Caco-2 (cell line): ENCODE measurements at regions of chr9 and their contacts with region 1.

Region 1: DNA sequence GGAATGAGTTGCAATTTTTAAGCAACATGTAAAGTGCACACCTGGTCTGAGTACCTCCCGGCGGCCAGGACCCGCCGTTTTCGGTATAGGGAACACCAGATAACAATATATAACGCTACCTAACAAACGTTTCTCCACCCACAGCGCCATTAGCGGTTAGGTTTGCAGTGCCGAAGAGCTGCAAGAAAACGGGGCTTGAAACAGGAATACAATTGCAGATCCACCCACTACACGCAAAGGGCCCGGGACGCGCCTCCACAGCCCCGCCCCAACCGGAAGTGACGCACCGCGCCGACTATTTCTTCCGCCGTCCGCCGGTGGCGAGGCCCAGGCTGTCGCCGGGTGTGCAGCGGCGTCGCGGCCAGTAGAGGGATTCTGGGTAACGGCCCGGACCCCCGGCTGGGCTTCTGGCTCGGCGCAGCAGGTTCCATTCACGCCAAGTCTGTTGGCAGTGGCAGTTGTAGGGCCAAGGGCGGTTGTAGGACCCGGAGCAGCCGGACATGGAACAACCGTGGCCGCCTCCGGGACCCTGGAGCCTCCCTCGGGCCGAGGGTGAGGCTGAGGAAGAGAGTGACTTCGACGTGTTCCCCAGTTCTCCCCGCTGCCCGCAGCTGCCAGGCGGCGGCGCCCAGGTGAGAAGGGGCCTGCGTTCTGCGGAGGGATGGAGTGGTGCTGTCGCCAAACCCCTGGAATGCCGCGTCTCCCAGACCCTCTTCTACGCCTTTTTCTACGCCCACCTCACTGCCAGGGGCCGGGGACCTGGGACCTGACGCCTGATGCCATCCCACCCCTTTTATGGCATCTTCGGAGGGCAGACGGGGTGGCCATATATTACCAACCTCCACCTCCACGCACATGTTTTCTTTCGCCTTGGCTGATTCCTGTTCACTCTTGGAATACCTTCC is at the start of gene CDC37L1:
- DNase-seq: peak; percentile 95 to 96
- H3K4me3 ChIP-seq: peak within 1 kb of the TSS; percentile 89
- H3K4me3 Mint-ChIP-seq: no peak within 1 kb of the TSS
- H3K27ac Mint-ChIP-seq: no peak within 1 kb of the TSS
- H3K4me1 ChIP-seq: peaks cover 12% of the 10 kb centered on the region
- H3K4me1 Mint-ChIP-seq: no peaks in the 10 kb centered on the region
- H3K27me3 ChIP-seq: no peaks in the 10 kb centered on the region
- H3K27me3 Mint-ChIP-seq: no peaks in the 10 kb centered on the region
- CTCF ChIP-seq: peak; percentile 47 to 51
- total RNA-seq, gene CDC37L1: 8.7 and 9.3 TPM in 2 replicates

Region 2: GRCh38 chr9:4489919-4490704 is 189.4 kb before region 1 on chr9 and contains the start of gene SLC1A1:
- CTCF ChIA-PET with region 1: no interaction called
- POLR2A ChIA-PET with region 1: interaction called, 4 read pairs
- intact Hi-C with region 1: loop called (anchors 1 kb)
- DNase-seq: peak; percentile 73 to 83
- H3K4me3 ChIP-seq: peak within 1 kb of the TSS; percentile 69
- H3K4me3 Mint-ChIP-seq: peak within 1 kb of the TSS; percentile 82
- H3K27ac Mint-ChIP-seq: peak within 1 kb of the TSS; percentile 97
- H3K4me1 ChIP-seq: peaks cover 40% of the 10 kb centered on the region
- H3K4me1 Mint-ChIP-seq: peaks cover 17% of the 10 kb centered on the region
- H3K27me3 ChIP-seq: no peaks in the 10 kb centered on the region
- H3K27me3 Mint-ChIP-seq: no peaks in the 10 kb centered on the region
- CTCF ChIP-seq: no peak
- total RNA-seq, gene SLC1A1: 43.3 and 53.1 TPM in 2 replicates

Region 3: GRCh38 chr9:4700091-4700490 is 20.6 kb after region 1 on chr9:
- CTCF ChIA-PET with region 1: no interaction called
- POLR2A ChIA-PET with region 1: no interaction called
- intact Hi-C with region 1: loop called (anchors 1 kb)
- DNase-seq: peak in 1 of 2 experiments; percentile 10
- H3K4me3 ChIP-seq: no peak overlapping the region
- H3K4me3 Mint-ChIP-seq: no peak overlapping the region
- H3K27ac Mint-ChIP-seq: no peak overlapping the region
- H3K4me1 ChIP-seq: 0 out of 2 replicates have a peak, but pooled peaks cover 6% of the 10 kb centered on the region
- H3K4me1 Mint-ChIP-seq: no peaks in the 10 kb centered on the region
- H3K27me3 ChIP-seq: no peaks in the 10 kb centered on the region
- H3K27me3 Mint-ChIP-seq: no peaks in the 10 kb centered on the region
- CTCF ChIP-seq: no peak

Region 4: DNA sequence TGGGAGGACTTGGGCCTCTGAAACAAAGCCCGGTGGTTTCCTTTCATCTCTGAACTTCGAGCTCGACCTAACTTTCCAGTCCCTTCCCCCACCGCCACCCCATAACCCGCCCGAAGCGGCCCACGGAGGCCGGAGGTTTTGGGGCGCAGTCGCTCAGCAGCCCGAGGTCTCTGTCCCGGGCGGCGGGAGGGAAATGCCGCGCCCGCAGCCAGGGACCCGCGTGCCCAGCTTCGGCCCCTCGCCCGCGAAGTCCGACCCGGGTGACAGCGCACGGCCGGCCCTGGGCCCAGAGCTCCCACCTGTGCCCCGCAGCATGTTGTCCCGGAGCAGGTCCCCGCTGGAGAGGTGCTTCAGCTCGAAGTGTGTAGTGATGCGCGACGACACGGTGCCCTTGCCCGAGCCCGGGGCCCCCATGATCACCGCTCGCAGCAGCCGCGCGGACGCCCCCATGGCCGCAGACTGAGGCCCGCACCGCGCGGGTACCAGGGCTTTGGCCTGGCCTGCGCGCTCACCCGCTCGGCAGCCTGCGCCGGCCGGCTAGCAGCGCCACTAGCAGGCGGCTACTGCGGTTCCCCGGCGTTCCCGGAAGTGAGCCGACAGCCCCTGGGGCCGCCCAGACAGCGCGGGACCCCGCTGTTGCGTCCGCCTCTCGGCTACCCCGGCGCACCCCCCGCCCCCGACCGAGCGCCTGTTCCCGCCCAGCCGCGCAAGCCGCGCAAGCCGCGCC is 61.3 kb after region 1 on chr9 and contains the start of gene AK3:
- CTCF ChIA-PET with region 1: no interaction called
- POLR2A ChIA-PET with region 1: no interaction called
- intact Hi-C with region 1: loop called (anchors 2 kb)
- DNase-seq: peak; percentile 77 to 85
- H3K4me3 ChIP-seq: peak within 1 kb of the TSS; percentile 78
- H3K4me3 Mint-ChIP-seq: peak within 1 kb of the TSS; percentile 91
- H3K27ac Mint-ChIP-seq: peak within 1 kb of the TSS; percentile 86
- H3K4me1 ChIP-seq: peaks cover 3% of the 10 kb centered on the region; the same call in 1 of the 2 replicates
- H3K4me1 Mint-ChIP-seq: no peaks in the 10 kb centered on the region
- H3K27me3 ChIP-seq: no peaks in the 10 kb centered on the region
- H3K27me3 Mint-ChIP-seq: peaks cover 4% of the 10 kb centered on the region
- CTCF ChIP-seq: no peak
- total RNA-seq, gene AK3: 31.9 and 32.0 TPM in 2 replicates

Region 5: DNA sequence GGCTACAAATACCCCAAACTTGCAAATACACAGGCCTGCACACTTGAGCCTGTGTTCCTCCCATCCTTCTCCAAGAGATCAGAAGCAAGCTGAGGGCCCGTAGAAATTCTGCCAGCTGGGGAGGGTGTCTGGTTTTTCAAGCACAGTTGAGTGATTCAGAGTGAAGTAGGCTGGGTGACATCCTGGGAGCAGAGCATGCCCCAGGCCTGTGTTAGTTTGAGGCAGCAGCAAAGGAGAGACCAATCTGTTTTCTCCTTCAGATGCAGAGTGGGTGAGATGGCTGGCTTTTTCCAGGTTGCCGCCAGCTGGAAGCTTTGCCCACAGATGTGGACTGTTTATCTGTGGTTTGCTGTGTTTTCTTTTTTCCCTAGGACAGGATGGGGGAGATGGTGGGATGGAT is 176.3 kb after region 1 on chr9:
- CTCF ChIA-PET with region 1: no interaction called
- POLR2A ChIA-PET with region 1: no interaction called
- intact Hi-C with region 1: no loop called
- DNase-seq: no peak
- H3K4me3 ChIP-seq: no peak overlapping the region
- H3K4me3 Mint-ChIP-seq: no peak overlapping the region
- H3K27ac Mint-ChIP-seq: no peak overlapping the region
- H3K4me1 ChIP-seq: peaks cover under 1% of the 10 kb centered on the region; the same call in 1 of the 2 replicates
- H3K4me1 Mint-ChIP-seq: no peaks in the 10 kb centered on the region
- H3K27me3 ChIP-seq: no peaks in the 10 kb centered on the region
- H3K27me3 Mint-ChIP-seq: no peaks in the 10 kb centered on the region
- CTCF ChIP-seq: no peak